ENCODE measurements at regions of chr10 and their contacts with region 1.

Region 1: GRCh38 chr10:73159038-73159648 is 8.7 kb downstream of the ECD start:
- DNase-seq: peak; percentile 97
- ATAC-seq: peak; percentile 62
- H3K4me3 ChIP-seq: no peak overlapping the region
- H3K27ac ChIP-seq: no peak overlapping the region
- H3K4me1 ChIP-seq: peaks cover 4% of the 10 kb centered on the region; the same call in 1 of the 2 replicates
- H3K27me3 ChIP-seq: no peaks in the 10 kb centered on the region
- CTCF ChIP-seq: peak; percentile 99

Region 2: GRCh38 chr10:72146559-72147323 is 1012.4 kb before region 1 on chr10:
- CTCF ChIA-PET with region 1: no interaction called
- POLR2A ChIA-PET with region 1: no interaction called
- intact Hi-C with region 1: no loop called
- DNase-seq: no peak
- ATAC-seq: no peak
- H3K4me3 ChIP-seq: no peak overlapping the region
- H3K27ac ChIP-seq: no peak overlapping the region
- H3K4me1 ChIP-seq: no peaks in the 10 kb centered on the region
- H3K27me3 ChIP-seq: no peaks in the 10 kb centered on the region
- CTCF ChIP-seq: no peak

Region 3: DNA sequence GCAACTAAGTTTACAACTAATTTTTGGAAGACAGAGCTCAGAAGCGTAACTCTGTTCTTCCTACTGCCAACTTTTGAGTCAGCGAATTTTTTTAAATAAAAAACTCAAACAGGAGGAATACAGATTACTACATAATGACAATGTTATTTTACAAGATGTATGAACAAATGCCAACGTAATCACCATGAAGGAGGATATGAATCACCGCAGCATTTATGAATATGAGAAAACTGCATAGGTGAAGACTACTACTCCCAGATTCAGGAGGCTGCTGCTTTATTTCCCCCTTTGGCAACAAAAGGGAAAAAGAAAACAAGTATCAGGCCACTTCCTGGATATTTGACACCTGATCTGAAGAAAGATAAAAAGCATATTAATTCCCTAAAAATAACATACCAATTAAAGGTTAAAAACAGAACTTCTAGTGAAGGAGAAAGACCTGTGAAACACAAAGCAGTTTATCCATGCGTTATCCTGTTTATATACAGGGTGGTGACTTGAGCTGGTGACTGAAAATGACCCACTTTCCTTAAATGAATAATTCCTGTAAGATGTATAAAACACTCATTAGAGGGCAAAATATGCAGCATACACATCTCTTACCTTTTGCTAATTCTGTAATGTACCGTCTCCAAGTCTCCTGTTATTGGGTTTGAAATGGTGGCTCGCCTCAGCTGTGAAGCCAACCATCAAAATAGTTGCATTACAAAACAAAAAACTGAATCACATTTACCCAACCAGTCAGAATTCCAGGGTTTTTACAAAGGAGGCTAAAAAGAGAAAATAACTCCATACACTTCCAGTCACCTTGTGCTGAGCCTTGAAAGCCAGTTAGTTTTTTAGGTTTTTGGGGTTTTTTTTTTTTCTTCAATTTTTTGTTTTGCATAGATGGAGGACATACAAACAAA is 114.5 kb before region 1 on chr10:
- CTCF ChIA-PET with region 1: no interaction called
- POLR2A ChIA-PET with region 1: no interaction called
- intact Hi-C with region 1: loop called (anchors 1 kb)
- DNase-seq: peak; percentile 100
- ATAC-seq: peak; percentile 86
- H3K4me3 ChIP-seq: peak overlapping the region; percentile 30
- H3K27ac ChIP-seq: peak overlapping the region; percentile 77
- H3K4me1 ChIP-seq: peaks cover 70% of the 10 kb centered on the region
- H3K27me3 ChIP-seq: no peaks in the 10 kb centered on the region
- CTCF ChIP-seq: no peak

Region 4: GRCh38 chr10:73110345-73110849 is 48.7 kb before region 1 on chr10 and contains the start of gene NUDT13:
- CTCF ChIA-PET with region 1: no interaction called
- POLR2A ChIA-PET with region 1: no interaction called
- intact Hi-C with region 1: loop called (anchors 5 kb)
- DNase-seq: peak; percentile 72
- ATAC-seq: peak; percentile 63
- H3K4me3 ChIP-seq: peak within 1 kb of the TSS; percentile 54
- H3K27ac ChIP-seq: peak within 1 kb of the TSS; percentile 68
- H3K4me1 ChIP-seq: peaks cover 30% of the 10 kb centered on the region
- H3K27me3 ChIP-seq: no peaks in the 10 kb centered on the region
- CTCF ChIP-seq: no peak
- total RNA-seq, gene NUDT13: 1.1 and 1.8 TPM in 2 replicates

Region 5: DNA sequence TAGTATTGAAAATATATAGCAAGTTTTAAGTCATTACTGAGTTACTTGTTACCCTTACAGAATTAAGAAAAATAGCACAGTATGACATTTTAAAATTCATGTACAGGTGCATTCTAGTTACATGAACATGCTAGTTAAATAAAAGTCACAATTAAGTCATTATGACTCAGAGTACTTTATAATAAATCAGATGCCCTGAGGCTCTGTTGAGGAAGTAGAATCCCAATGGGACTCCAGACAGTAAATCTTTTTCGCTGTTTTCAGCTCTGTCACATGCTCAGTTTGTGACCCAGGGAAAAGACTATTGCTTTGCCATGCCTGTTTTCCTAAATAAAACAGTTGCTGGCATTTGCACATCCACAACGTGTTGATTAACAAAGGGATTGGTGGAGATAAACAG is 27.8 kb before region 1 on chr10:
- CTCF ChIA-PET with region 1: interaction called, 3 read pairs
- POLR2A ChIA-PET with region 1: interaction called, 4 read pairs
- intact Hi-C with region 1: loop called (anchors 2 kb)
- DNase-seq: peak; percentile 100
- ATAC-seq: peak; percentile 96
- H3K4me3 ChIP-seq: peak overlapping the region; percentile 1; the same call in 1 of the 2 replicates
- H3K27ac ChIP-seq: peak overlapping the region; percentile 72
- H3K4me1 ChIP-seq: peaks cover 29% of the 10 kb centered on the region
- H3K27me3 ChIP-seq: no peaks in the 10 kb centered on the region
- CTCF ChIP-seq: no peak

Region 6: GRCh38 chr10:73879296-73880173 is 720.4 kb after region 1 on chr10:
- CTCF ChIA-PET with region 1: no interaction called
- POLR2A ChIA-PET with region 1: no interaction called
- intact Hi-C with region 1: no loop called
- DNase-seq: peak; percentile 100
- ATAC-seq: peak; percentile 76
- H3K4me3 ChIP-seq: peak overlapping the region; percentile 8; the same call in 1 of the 2 replicates
- H3K27ac ChIP-seq: no peak overlapping the region
- H3K4me1 ChIP-seq: peaks cover 51% of the 10 kb centered on the region
- H3K27me3 ChIP-seq: no peaks in the 10 kb centered on the region
- CTCF ChIP-seq: peak; percentile 100

Measured in PC-3 (cell line).